ENCODE measurements at regions of chr12 and their contacts with region 1.

Region 1: GRCh38 chr12:123889848-123890535 is 82.6 kb downstream of the CCDC92 start:
- DNase-seq: no peak
- ATAC-seq: no peak
- H3K4me3 ChIP-seq: no peak overlapping the region
- H3K27ac ChIP-seq: no peak overlapping the region
- H3K4me1 ChIP-seq: peaks cover 6% of the 10 kb centered on the region; the same call in 1 of the 2 replicates
- H3K27me3 ChIP-seq: peaks cover 18% of the 10 kb centered on the region
- CTCF ChIP-seq: no peak

Region 2: GRCh38 chr12:123713398-123713797 is 176.6 kb before region 1 on chr12:
- CTCF ChIA-PET with region 1: no interaction called
- POLR2A ChIA-PET with region 1: no interaction called
- in situ Hi-C with region 1: no loop called
- intact Hi-C with region 1: no loop called
- DNase-seq: no peak
- ATAC-seq: no peak
- H3K4me3 ChIP-seq: peak overlapping the region; percentile 79 to 85
- H3K27ac ChIP-seq: peak overlapping the region; percentile 79
- H3K4me1 ChIP-seq: peaks cover 8% of the 10 kb centered on the region
- H3K27me3 ChIP-seq: no peaks in the 10 kb centered on the region
- CTCF ChIP-seq: no peak

Region 3: DNA sequence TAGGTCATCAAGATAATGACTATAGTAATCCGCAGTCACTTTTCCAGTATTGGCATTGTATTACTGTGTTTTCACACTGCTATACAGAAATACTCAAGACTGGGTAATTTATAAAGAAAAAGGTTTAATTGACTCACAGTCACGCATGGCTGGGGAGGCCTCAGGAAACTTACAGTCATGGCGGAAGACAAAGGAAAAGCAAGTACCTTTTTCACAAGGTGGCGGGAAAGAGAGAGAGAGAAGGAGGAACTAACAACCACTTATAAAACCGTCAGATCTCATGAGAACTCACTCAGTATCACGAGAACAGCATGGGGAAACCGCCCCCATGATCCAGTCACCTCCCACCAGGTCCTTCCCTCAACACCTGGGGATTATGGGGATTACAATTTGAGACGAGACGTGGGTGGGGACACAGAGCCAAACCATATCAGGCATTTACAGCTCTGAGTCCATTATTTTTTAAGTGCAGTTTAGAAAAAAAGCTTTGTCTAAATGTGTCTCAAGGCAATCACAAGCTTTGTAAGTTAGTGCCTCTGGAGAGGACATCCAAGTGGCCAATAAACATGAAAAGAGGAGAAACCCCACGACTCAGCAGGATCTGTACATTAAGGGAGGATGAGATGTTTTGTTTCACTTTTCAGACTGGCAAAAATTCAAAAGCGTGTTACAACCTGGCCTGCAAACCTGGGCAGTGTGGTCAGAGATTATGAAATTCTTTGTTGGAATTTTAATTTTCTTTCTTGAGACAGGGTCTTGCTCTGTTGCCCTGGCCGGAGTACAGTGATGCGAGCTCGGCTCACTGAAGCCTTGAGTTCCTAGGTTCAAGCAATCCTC is 45.9 kb before region 1 on chr12:
- CTCF ChIA-PET with region 1: no interaction called
- POLR2A ChIA-PET with region 1: interaction called, 10 read pairs
- in situ Hi-C with region 1: no loop called
- intact Hi-C with region 1: no loop called
- DNase-seq: no peak
- ATAC-seq: no peak
- H3K4me3 ChIP-seq: no peak overlapping the region
- H3K27ac ChIP-seq: no peak overlapping the region
- H3K4me1 ChIP-seq: no peaks in the 10 kb centered on the region
- H3K27me3 ChIP-seq: no peaks in the 10 kb centered on the region
- CTCF ChIP-seq: no peak

Measured in Panc1 (cell line).